ENCODE measurements at regions of chr20 and their contacts with region 1.

Region 1: DNA sequence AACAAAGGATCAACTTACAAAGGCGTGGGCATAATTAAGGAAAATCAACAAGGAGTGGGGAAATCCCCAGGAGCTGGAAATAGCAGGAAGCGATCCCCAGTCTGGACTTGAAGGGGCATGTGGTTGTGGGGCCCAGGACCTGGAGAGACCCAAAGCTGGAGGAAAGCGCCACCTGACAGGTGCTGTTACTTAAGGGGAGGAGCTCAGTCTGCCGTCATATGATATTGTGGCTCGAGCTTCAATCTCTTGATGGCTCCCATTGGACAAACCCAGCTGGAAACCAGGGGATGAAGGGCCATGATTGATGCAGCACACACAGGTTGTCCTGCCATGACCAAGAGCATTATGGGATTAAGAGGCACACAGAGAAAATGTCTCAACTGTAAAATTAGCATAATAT is 51.9 kb upstream of the FAM210B start:
- DNase-seq: no peak
- ATAC-seq: no peak
- H3K4me3 ChIP-seq: no peak overlapping the region
- H3K27ac ChIP-seq: no peak overlapping the region
- H3K4me1 ChIP-seq: no peaks in the 10 kb centered on the region
- H3K27me3 ChIP-seq: no peaks in the 10 kb centered on the region
- CTCF ChIP-seq: no peak
- EP300 ChIP-seq: no peak
- POLR2A ChIP-seq: no peak
- RAD21 ChIP-seq: no peak

Region 2: GRCh38 chr20:56322681-56323080 is 15.8 kb after region 1 on chr20:
- CTCF ChIA-PET with region 1: no interaction called
- POLR2A ChIA-PET with region 1: no interaction called
- in situ Hi-C with region 1: no loop called
- intact Hi-C with region 1: no loop called
- DNase-seq: no peak
- ATAC-seq: no peak
- H3K4me3 ChIP-seq: no peak overlapping the region
- H3K27ac ChIP-seq: no peak overlapping the region
- H3K4me1 ChIP-seq: no peaks in the 10 kb centered on the region
- H3K27me3 ChIP-seq: no peaks in the 10 kb centered on the region
- CTCF ChIP-seq: no peak
- EP300 ChIP-seq: no peak
- POLR2A ChIP-seq: no peak
- RAD21 ChIP-seq: no peak

Region 3: DNA sequence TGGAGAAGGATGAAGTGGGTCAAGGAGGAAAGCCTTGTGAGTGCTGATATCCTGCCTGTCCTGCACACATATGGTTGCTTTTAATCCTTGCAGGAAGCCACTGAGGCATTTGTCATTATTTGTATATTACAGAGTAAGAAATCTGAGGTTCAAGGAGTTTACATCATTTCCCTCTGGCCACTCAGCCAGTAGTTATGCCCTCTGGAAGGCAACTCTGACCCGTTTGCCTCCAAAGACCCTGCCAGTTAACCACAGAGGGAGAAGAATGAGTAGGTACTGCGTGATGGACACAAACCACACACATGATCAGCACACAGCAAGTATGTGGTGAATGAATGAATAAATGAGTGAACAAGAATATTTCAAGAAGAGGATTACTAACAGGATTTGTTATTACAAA is 43.9 kb after region 1 on chr20:
- CTCF ChIA-PET with region 1: no interaction called
- POLR2A ChIA-PET with region 1: no interaction called
- in situ Hi-C with region 1: no loop called
- intact Hi-C with region 1: loop called (anchors 5 kb)
- DNase-seq: no peak
- ATAC-seq: no peak
- H3K4me3 ChIP-seq: no peak overlapping the region
- H3K27ac ChIP-seq: no peak overlapping the region
- H3K4me1 ChIP-seq: no peaks in the 10 kb centered on the region; a peak in 1 of 5 replicates
- H3K27me3 ChIP-seq: peaks cover 6 to 13% of the 10 kb centered on the region in 2 experiments; a peak in 4 of 5 replicates
- CTCF ChIP-seq: no peak
- EP300 ChIP-seq: no peak
- POLR2A ChIP-seq: no peak
- RAD21 ChIP-seq: no peak

Measured in K562 (cell line).